ENCODE measurements at regions of chr2 and their contacts with region 1.

Region 1: DNA sequence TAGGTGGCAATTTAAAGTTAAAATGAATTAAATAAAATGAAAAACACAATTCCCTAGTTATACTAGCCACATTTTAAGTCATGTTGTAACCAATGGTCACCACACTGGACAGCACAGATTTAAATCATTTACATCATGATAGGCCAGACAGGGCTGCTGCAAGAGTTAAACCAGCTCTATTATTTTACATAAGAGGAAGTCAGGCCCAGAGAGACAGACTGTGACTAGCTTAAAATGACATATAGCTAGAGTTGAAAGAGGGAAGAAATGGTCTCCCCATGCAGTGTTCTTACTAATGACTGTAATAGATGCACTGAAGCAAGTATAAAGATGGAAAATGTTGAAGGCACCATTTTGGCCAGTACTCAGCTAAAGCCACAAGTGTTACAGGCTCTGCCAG is 69.6 kb downstream of the SLC66A3 start:
- DNase-seq: no peak
- H3K4me3 ChIP-seq: no peak overlapping the region
- H3K27ac ChIP-seq: no peak overlapping the region
- H3K4me1 ChIP-seq: peaks cover 9% of the 10 kb centered on the region
- H3K27me3 ChIP-seq: no peaks in the 10 kb centered on the region
- CTCF ChIP-seq: no peak
- POLR2A ChIP-seq: no peak

Region 2: GRCh38 chr2:11056614-11057013 is 168.3 kb before region 1 on chr2:
- CTCF ChIA-PET with region 1: no interaction called
- POLR2A ChIA-PET with region 1: no interaction called
- dilution Hi-C with region 1: no loop called
- intact Hi-C with region 1: no loop called
- DNase-seq: no peak
- H3K4me3 ChIP-seq: no peak overlapping the region
- H3K27ac ChIP-seq: no peak overlapping the region
- H3K4me1 ChIP-seq: no peaks in the 10 kb centered on the region
- H3K27me3 ChIP-seq: peaks cover 2 to 34% of the 10 kb centered on the region in 2 experiments
- CTCF ChIP-seq: no peak
- POLR2A ChIP-seq: no peak

Region 3: GRCh38 chr2:11214770-11215169 is 10.1 kb before region 1 on chr2:
- CTCF ChIA-PET with region 1: interaction called, 10 read pairs
- POLR2A ChIA-PET with region 1: no interaction called
- dilution Hi-C with region 1: no loop called
- intact Hi-C with region 1: no loop called
- DNase-seq: no peak
- H3K4me3 ChIP-seq: no peak overlapping the region
- H3K27ac ChIP-seq: no peak overlapping the region
- H3K4me1 ChIP-seq: no peaks in the 10 kb centered on the region
- H3K27me3 ChIP-seq: no peaks in the 10 kb centered on the region
- CTCF ChIP-seq: no peak
- POLR2A ChIP-seq: no peak

Region 4: GRCh38 chr2:11254100-11254536 is 29.2 kb after region 1 on chr2:
- CTCF ChIA-PET with region 1: no interaction called
- POLR2A ChIA-PET with region 1: no interaction called
- dilution Hi-C with region 1: no loop called
- intact Hi-C with region 1: no loop called
- DNase-seq: no peak
- H3K4me3 ChIP-seq: no peak overlapping the region
- H3K27ac ChIP-seq: no peak overlapping the region
- H3K4me1 ChIP-seq: peaks cover 8% of the 10 kb centered on the region
- H3K27me3 ChIP-seq: no peaks in the 10 kb centered on the region
- CTCF ChIP-seq: no peak
- POLR2A ChIP-seq: no peak

Measured in endothelial cell of umbilical vein (primary cell).